ENCODE measurements at regions of chr5 and their contacts with region 1.

Region 1: GRCh38 chr5:5313101-5313635 is 109.3 kb upstream of the ICE1 start:
- DNase-seq: no peak
- ATAC-seq: peak in 3 of 4 donors; percentile 65 to 77 (median 70)
- H3K4me3 ChIP-seq: peak overlapping the region; percentile 10
- H3K27ac ChIP-seq: peak overlapping the region; percentile 74
- H3K4me1 ChIP-seq: peaks cover 52% of the 10 kb centered on the region
- H3K27me3 ChIP-seq: no peaks in the 10 kb centered on the region
- CTCF ChIP-seq: no peak

Region 2: GRCh38 chr5:4082966-4083564 is 1230.1 kb before region 1 on chr5:
- intact Hi-C with region 1: no loop called
- DNase-seq: no peak
- ATAC-seq: no peak
- H3K4me3 ChIP-seq: no peak overlapping the region
- H3K27ac ChIP-seq: no peak overlapping the region
- H3K4me1 ChIP-seq: no peaks in the 10 kb centered on the region
- H3K27me3 ChIP-seq: no peaks in the 10 kb centered on the region
- CTCF ChIP-seq: no peak

Region 3: DNA sequence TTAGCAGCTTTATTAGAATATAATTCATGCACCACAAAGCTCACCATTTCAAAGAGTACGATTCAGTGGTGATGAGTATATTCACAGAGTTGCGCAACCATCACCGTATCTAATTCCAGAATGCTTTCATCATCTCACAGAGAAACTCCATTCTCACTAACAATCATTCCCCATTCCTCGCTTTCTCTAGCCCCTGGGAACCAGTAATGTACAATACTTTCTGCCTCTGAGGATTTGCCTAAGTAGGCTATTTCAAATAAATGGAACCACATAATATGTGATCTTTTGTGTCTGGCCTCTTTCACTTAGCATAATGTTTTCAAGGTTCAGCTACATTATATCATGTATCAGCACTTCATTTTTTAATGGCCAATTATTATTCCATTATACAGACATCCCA is 318.2 kb before region 1 on chr5:
- intact Hi-C with region 1: no loop called
- DNase-seq: no peak
- ATAC-seq: no peak
- H3K4me3 ChIP-seq: no peak overlapping the region
- H3K27ac ChIP-seq: no peak overlapping the region
- H3K4me1 ChIP-seq: no peaks in the 10 kb centered on the region
- H3K27me3 ChIP-seq: no peaks in the 10 kb centered on the region
- CTCF ChIP-seq: no peak

Region 4: DNA sequence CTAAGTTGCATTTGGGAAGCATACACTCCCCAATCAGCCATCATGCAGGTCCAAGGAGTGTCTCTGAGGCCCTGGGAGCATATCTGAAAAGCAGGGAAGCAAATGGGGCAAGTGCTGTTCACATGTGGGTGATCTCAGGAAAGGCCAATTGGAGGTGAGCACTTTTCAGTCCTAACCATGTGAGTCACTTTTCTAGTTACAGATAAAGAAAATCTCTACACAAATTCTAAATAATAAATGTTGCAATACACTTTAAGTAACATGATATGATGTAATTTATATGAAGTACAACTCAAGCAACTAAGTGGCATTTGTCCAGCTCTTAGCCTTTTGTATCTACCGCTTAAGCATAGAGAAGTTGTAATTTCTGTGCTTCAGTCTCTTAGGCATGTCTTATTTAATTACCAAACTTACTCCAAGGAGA is 154.7 kb before region 1 on chr5:
- intact Hi-C with region 1: loop called in 1 of 2 experiments (anchors 10 kb)
- DNase-seq: no peak
- ATAC-seq: no peak
- H3K4me3 ChIP-seq: no peak overlapping the region
- H3K27ac ChIP-seq: no peak overlapping the region
- H3K4me1 ChIP-seq: peaks cover 41% of the 10 kb centered on the region
- H3K27me3 ChIP-seq: no peaks in the 10 kb centered on the region
- CTCF ChIP-seq: no peak

Region 5: GRCh38 chr5:5178136-5178535 is 135.0 kb before region 1 on chr5:
- intact Hi-C with region 1: no loop called
- DNase-seq: no peak
- ATAC-seq: no peak
- H3K4me3 ChIP-seq: no peak overlapping the region
- H3K27ac ChIP-seq: no peak overlapping the region
- H3K4me1 ChIP-seq: no peaks in the 10 kb centered on the region
- H3K27me3 ChIP-seq: no peaks in the 10 kb centered on the region
- CTCF ChIP-seq: no peak

Region 6: DNA sequence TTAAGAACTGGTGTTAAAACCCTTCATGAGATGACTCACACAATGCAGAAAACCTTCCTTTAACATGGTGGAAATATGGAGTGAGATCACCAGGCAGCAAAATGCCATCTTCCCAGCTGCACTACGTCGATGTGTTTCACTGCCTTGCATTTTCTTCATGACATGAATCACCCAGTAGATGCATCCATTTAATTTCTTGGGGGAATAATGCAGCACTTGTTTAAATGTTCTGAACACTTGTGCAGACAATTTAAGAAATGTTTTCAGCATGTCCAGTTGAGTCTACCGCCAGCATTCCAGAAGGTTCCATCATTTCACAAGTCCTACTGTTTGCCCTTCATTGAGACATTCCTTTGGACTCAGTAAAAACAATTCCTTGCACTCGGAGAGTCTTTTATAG is 91.4 kb before region 1 on chr5:
- intact Hi-C with region 1: loop called in 1 of 2 experiments (anchors 5 kb)
- DNase-seq: no peak
- ATAC-seq: no peak
- H3K4me3 ChIP-seq: no peak overlapping the region
- H3K27ac ChIP-seq: no peak overlapping the region
- H3K4me1 ChIP-seq: peaks cover 15% of the 10 kb centered on the region
- H3K27me3 ChIP-seq: no peaks in the 10 kb centered on the region
- CTCF ChIP-seq: no peak

Region 7: GRCh38 chr5:5340206-5340729 is 27.1 kb after region 1 on chr5:
- intact Hi-C with region 1: loop called in 1 of 2 experiments (anchors 2 kb)
- DNase-seq: peak; percentile 87 to 90
- ATAC-seq: peak; percentile 97 to 99 (median 98)
- H3K4me3 ChIP-seq: no peak overlapping the region
- H3K27ac ChIP-seq: peak overlapping the region; percentile 57
- H3K4me1 ChIP-seq: peaks cover 37% of the 10 kb centered on the region
- H3K27me3 ChIP-seq: no peaks in the 10 kb centered on the region
- CTCF ChIP-seq: peak; percentile 54